Gastrocnemius medialis (tissue), 4 donors: ENCODE measurements at regions of chr16 and their contacts with region 1.

Region 1: DNA sequence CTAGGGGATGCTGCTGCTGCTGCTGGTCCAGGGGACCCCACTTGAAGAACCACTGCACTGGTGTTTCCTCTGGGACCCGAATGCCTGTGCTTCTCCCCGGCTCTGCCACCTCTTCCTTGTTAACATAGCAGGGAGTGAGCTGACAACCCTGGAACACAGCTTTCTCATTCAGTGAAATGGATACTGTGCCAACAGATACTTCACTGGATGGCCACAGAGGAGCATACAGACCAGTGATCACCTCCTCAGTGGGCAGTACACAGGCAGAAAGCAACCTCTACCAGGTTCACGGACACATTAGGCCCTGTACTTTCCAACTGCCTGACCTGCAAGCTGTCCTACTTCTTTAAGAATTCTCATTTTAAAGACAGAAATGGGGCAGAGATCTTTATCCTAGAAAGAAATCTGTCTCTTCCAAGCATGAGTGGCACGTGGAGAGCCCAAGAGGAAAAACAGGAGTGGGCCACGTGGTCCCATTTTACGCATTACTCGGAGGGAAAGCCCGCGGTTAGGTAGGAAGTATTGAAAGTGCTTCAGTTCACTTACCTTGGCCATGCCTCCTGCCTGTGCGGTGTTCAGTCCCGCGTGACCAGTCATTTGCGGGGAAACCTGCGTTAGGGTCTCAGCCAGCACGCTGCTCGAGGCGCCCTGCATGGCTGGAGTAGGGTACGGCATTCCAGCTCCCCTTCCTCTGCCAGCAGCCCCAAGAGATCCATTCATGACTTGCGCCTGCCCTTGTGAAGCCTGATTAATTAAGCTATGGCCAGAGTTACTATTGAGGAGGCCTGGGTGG is 30.6 kb downstream of the CREBBP start:
- DNase-seq: no peak
- ATAC-seq: no peak
- H3K4me3 ChIP-seq: no peak overlapping the region
- H3K27ac ChIP-seq: peak overlapping the region in 1 of 4 donors; percentile 1
- H3K4me1 ChIP-seq: peaks cover 37 to 51% of the 10 kb centered on the region in 2 donors
- H3K27me3 ChIP-seq: no peaks in the 10 kb centered on the region
- CTCF ChIP-seq: no peak
- POLR2A ChIP-seq: no peak

Region 2: DNA sequence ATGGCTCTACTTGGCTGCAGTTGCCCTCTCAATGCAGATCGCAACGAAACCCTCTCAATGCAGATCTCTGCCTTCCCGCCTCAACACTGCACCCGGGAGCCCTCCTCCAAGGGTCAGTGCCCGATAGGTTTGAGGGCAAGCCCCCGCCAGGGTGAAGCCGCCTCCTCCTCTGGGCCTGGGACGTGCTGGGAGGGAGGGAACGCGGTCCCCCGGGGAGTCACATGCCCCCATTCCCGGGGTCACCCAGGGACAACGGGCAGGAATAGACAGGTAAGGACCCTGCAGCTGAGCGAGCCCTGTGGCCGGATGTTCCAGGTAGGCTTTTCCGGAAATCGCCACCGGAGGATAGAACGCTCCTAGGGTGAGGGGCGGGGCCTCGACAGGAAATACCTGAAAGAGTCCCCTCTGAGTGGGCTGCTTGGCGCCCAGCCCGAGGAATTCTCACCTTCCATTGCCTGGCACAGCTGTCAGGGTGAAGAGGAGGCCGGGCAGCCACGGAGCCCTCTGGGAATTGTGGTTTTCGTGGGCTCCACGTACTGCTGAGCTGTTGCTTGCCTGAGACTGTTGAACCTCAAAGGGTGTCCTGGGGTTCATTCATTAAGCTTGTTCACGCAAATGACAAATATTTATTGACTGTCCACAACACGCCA is 436.1 kb before region 1 on chr16:
- in situ Hi-C with region 1: no loop called
- intact Hi-C with region 1: no loop called
- DNase-seq: no peak
- ATAC-seq: no peak
- H3K4me3 ChIP-seq: no peak overlapping the region
- H3K27ac ChIP-seq: no peak overlapping the region
- H3K4me1 ChIP-seq: no peaks in the 10 kb centered on the region
- H3K27me3 ChIP-seq: no peaks in the 10 kb centered on the region
- CTCF ChIP-seq: no peak
- POLR2A ChIP-seq: no peak

Region 3: GRCh38 chr16:3797904-3798811 is 51.8 kb before region 1 on chr16:
- in situ Hi-C with region 1: no loop called
- intact Hi-C with region 1: loop called (anchors 5 kb)
- DNase-seq: no peak
- ATAC-seq: no peak
- H3K4me3 ChIP-seq: no peak overlapping the region
- H3K27ac ChIP-seq: no peak overlapping the region
- H3K4me1 ChIP-seq: peaks cover 47 to 75% of the 10 kb centered on the region in 2 donors
- H3K27me3 ChIP-seq: no peaks in the 10 kb centered on the region
- CTCF ChIP-seq: no peak
- POLR2A ChIP-seq: no peak